Naive thymus-derived CD4-positive, alpha-beta T cell (primary cell): ENCODE measurements at regions of chr2 and their contacts with region 1.

Region 1: DNA sequence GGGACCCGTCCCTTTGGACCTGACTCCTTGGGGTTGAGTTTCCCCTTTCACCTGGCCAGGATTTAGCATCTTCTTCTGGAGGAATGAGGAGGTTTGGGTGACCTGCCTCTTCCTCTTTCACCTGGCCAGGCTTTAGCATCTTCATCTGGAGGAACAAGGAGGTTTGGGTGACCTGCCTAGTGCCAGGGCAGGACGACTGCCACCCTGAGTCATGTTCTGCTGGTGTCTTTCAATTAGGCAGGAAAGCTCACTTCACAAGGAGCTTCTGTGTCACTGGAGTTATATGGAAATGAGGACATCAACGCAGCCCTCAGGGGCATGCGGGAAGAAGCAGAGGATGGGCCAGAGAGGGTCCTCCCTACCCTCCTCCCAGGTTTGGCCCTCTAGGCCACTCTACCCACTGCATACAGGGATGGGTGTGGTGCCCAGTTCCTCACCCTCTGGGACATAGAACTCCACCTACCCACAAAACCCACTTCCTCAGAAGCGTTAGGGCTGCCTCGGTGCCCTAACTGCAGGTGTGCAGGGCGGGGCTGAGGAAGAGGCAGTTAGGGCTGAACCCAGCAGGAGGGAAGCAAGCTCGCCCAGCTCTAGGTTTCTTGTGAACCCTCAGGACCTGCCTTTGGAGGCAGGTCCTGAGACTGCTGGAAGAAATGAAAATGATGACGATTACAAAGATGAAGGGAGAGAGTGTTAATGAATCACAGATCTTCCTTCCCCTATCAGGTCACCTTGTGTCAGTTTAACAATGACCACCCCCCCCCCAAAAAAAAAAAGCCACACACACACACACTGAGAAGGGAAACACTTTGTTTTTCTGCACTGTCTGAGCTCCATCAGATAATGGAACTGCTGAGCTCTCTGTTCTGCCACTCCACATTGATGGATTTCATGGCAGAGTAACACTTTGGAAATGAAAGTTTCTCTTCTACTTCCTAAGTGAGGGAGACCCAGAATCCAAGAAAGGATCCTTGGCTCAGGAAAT is 71.0 kb downstream of the ARL4C start:
- DNase-seq: peak; percentile 53 to 93 (median 92)
- ATAC-seq: peak; percentile 84
- H3K4me3 ChIP-seq: peak overlapping the region; percentile 43
- H3K4me3 Mint-ChIP-seq: peak overlapping the region; percentile 73 to 87 (median 82)
- H3K27ac ChIP-seq: peak overlapping the region; percentile 93
- H3K27ac Mint-ChIP-seq: peak overlapping the region; percentile 97 to 100 (median 100)
- H3K4me1 ChIP-seq: peaks cover 86 to 92% of the 10 kb centered on the region in 2 donors
- H3K4me1 Mint-ChIP-seq: peaks cover 70 to 100% (median 91%) of the 10 kb centered on the region in 7 donors
- H3K27me3 ChIP-seq: no peaks in the 10 kb centered on the region
- H3K27me3 Mint-ChIP-seq: no peaks in the 10 kb centered on the region

Region 2: GRCh38 chr2:234135720-234136221 is 290.1 kb before region 1 on chr2:
- CTCF ChIA-PET with region 1: interaction called, 4 read pairs
- POLR2A ChIA-PET with region 1: interaction called, 4 read pairs
- intact Hi-C with region 1: loop called in 1 of 2 experiments (anchors 2 kb)
- DNase-seq: peak; percentile 13 to 52 (median 40)
- ATAC-seq: peak; percentile 73
- H3K4me3 ChIP-seq: peak overlapping the region; percentile 2
- H3K4me3 Mint-ChIP-seq: peak overlapping the region in 2 of 10 donors; percentile 9 to 30
- H3K27ac ChIP-seq: no peak overlapping the region
- H3K27ac Mint-ChIP-seq: peak overlapping the region; percentile 31 to 83 (median 56)
- H3K4me1 ChIP-seq: peaks cover 23 to 24% of the 10 kb centered on the region in 2 donors
- H3K4me1 Mint-ChIP-seq: peaks cover 6 to 31% (median 29%) of the 10 kb centered on the region in 7 donors
- H3K27me3 ChIP-seq: no peaks in the 10 kb centered on the region
- H3K27me3 Mint-ChIP-seq: peaks cover 0 to 17% (median 0%) of the 10 kb centered on the region in 5 donors

Region 3: GRCh38 chr2:234374736-234375135 is 51.2 kb before region 1 on chr2:
- CTCF ChIA-PET with region 1: interaction called, 3 read pairs
- POLR2A ChIA-PET with region 1: interaction called, 13 read pairs
- intact Hi-C with region 1: loop called (anchors 1 to 2 kb)
- DNase-seq: no peak
- ATAC-seq: no peak
- H3K4me3 ChIP-seq: no peak overlapping the region
- H3K4me3 Mint-ChIP-seq: peak overlapping the region in 2 of 10 donors; percentile 35 to 76
- H3K27ac ChIP-seq: no peak overlapping the region
- H3K27ac Mint-ChIP-seq: peak overlapping the region; percentile 57 to 98 (median 94)
- H3K4me1 ChIP-seq: peaks cover 7 to 47% of the 10 kb centered on the region in 2 donors
- H3K4me1 Mint-ChIP-seq: peaks cover 26 to 74% (median 62%) of the 10 kb centered on the region in 7 donors
- H3K27me3 ChIP-seq: no peaks in the 10 kb centered on the region
- H3K27me3 Mint-ChIP-seq: no peaks in the 10 kb centered on the region

Region 4: DNA sequence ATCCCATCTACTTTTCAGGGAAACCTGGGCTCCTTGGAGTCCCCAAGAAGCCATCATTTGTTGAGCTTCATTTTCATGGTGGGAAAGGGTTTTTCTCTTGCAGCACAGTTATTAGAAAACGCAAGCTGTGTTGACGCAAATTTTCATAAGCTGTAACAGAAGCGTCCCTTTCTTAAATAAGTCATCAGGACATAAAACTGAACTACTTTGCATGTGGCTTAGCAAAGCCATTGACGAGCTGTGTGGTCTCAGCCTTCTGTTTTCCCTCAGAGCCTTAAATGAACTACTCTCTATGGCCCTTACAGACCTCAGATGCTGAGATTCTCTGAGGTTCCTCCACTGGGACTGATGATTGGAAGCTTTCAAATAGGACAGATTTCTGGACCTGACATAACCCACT is 14.1 kb before region 1 on chr2:
- CTCF ChIA-PET with region 1: interaction called, 3 read pairs
- POLR2A ChIA-PET with region 1: interaction called, 33 read pairs
- intact Hi-C with region 1: no loop called
- DNase-seq: no peak
- ATAC-seq: no peak
- H3K4me3 ChIP-seq: no peak overlapping the region
- H3K4me3 Mint-ChIP-seq: no peak overlapping the region
- H3K27ac ChIP-seq: no peak overlapping the region
- H3K27ac Mint-ChIP-seq: peak overlapping the region in 5 of 9 donors; percentile 8 to 84 (median 20)
- H3K4me1 ChIP-seq: peaks cover 0 to 10% of the 10 kb centered on the region in 2 donors
- H3K4me1 Mint-ChIP-seq: peaks cover 17 to 52% (median 42%) of the 10 kb centered on the region in 7 donors
- H3K27me3 ChIP-seq: no peaks in the 10 kb centered on the region
- H3K27me3 Mint-ChIP-seq: no peaks in the 10 kb centered on the region

Region 5: GRCh38 chr2:234451852-234452625 is 26.1 kb after region 1 on chr2:
- CTCF ChIA-PET with region 1: interaction called, 7 read pairs
- POLR2A ChIA-PET with region 1: interaction called, 643 read pairs
- intact Hi-C with region 1: loop called in 1 of 2 experiments (anchors 1 kb)
- DNase-seq: peak in 7 of 9 donors; percentile 30 to 74 (median 62)
- ATAC-seq: peak; percentile 41
- H3K4me3 ChIP-seq: peak overlapping the region; percentile 71
- H3K4me3 Mint-ChIP-seq: peak overlapping the region; percentile 83 to 99 (median 91)
- H3K27ac ChIP-seq: peak overlapping the region; percentile 96
- H3K27ac Mint-ChIP-seq: peak overlapping the region; percentile 90 to 100 (median 96)
- H3K4me1 ChIP-seq: peaks cover 66 to 70% of the 10 kb centered on the region in 2 donors
- H3K4me1 Mint-ChIP-seq: peaks cover 32 to 88% (median 84%) of the 10 kb centered on the region in 7 donors
- H3K27me3 ChIP-seq: no peaks in the 10 kb centered on the region
- H3K27me3 Mint-ChIP-seq: no peaks in the 10 kb centered on the region

Region 6: DNA sequence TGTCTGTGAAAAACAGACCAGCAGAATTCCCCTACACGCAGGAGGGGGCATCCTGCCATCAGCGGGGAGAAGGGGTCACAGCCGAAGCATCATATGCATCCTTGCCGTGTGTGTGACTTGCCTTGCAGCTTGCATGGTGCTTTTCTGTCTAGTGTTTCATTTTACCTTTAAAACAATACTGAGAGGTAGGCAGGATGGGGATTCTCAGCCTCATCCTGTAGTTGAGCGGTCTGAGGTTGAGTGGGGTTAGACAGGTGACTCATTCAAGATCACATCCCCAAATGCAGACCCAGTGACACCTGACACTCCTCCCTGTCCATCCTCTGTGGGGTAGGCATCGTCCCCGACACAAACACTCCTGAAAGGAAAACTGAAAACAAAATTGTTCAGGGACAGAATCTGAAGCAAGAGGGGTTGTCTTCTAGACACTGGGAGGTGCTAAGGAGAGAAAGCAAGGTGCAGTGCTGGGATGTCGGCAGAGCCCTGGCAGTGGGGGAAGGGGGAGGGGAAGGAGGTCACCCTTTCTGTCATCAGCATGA is 63.1 kb after region 1 on chr2:
- CTCF ChIA-PET with region 1: interaction called, 7 read pairs
- POLR2A ChIA-PET with region 1: interaction called, 99 read pairs
- intact Hi-C with region 1: loop called (anchors 1 kb)
- DNase-seq: peak in 8 of 9 donors; percentile 64 to 89 (median 82)
- ATAC-seq: peak; percentile 80
- H3K4me3 ChIP-seq: peak overlapping the region; percentile 48
- H3K4me3 Mint-ChIP-seq: peak overlapping the region; percentile 85 to 100 (median 96)
- H3K27ac ChIP-seq: peak overlapping the region; percentile 94
- H3K27ac Mint-ChIP-seq: peak overlapping the region; percentile 91 to 100 (median 98)
- H3K4me1 ChIP-seq: peaks cover 68 to 83% of the 10 kb centered on the region in 2 donors
- H3K4me1 Mint-ChIP-seq: peaks cover 39 to 84% (median 79%) of the 10 kb centered on the region in 7 donors
- H3K27me3 ChIP-seq: no peaks in the 10 kb centered on the region
- H3K27me3 Mint-ChIP-seq: peaks cover 0 to 2% (median 0%) of the 10 kb centered on the region in 5 donors